Calu3 (cell line): ENCODE measurements at regions of chr18 and their contacts with region 1.

Region 1: DNA sequence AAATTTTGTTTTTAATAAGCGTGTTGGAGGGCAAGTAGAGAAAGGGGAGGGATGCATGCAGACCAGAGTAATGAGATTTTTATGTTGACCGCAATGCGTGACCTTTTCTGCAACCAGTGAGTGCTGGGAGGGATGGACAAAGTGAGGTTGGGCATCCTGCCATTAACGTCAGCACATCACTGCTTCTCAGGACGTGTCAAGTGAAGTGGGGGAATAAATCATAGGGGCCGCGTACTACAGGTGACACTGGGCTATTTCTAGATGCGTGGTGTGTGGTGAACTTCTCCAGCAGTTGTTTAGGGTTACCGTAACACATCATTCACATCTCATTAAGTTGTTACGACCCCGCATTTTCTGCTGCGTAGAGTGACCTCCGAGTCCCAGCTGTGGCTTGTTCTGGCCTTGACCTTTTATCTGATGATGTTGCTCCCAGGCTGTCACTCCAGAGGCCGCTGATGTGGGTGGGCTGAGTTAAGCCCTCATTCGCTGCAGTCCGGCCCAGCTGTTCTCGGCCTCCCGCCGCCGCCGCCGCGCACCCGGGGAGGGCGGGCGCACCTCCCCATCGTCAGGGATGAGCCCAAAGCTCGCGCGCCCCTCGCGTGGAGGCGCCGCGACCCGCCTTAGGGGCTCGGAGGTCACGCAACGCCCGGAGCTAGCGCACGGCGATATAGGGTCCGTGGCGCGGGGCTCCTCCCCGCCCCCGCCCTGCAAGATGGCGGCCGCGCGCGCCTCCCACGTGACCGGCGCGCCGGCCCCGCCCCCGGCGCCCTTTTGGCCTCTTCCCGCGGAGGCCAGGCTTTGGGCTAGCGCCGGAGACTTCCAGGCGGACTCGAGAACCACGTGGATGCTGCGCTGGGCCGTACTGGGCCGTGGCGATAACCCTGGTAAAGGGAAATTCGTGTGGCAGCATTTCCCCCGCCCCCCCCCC is 3.5 kb downstream of the ZCCHC2 start:
- DNase-seq: peak; percentile 83
- H3K4me3 Mint-ChIP-seq: peak overlapping the region; percentile 84
- H3K27ac Mint-ChIP-seq: peak overlapping the region; percentile 97
- H3K4me1 Mint-ChIP-seq: peaks cover 38% of the 10 kb centered on the region
- H3K27me3 Mint-ChIP-seq: no peaks in the 10 kb centered on the region
- CTCF ChIP-seq: no peak

Region 2: DNA sequence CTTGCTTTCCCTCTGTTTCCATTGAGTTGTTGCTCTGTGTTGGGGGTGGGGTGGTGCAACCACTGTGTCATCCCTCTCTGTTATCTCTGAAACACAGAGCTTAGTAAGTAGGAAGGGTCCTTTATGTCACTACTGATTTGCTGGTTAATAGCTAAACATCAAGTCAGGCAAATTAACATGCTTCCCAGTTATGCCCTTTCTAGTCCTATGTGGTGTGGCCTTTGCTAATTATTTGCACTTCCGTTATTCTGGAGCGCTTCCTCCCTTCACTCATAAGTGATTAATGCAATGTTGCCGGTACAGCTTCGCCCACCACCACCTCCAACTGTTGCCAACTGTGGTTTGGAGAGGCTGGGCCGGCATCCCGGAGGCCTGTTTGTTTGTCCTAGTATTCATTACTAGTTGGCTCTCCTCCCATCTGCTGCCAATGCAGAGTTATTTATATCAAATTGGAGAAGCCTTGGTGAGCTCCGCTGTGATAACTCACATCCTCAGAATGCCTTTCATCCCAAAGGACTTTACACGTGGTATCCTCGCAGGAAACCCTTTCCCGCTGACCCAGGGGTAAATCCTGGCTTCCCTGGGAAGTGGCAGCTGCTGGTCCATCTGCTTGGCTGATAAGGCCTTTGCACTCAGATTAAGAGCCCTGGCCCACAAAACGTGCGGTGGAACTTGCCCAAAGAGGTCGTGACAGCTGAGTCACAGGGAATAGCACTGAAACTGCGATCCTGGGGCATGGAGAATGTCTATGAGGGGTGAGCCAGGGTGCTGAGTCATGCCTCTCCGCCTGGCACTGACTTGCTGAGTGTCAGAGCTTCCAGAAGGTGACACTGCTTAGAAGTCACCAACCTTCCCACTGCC is 75.6 kb before region 1 on chr18:
- CTCF ChIA-PET with region 1: interaction called, 8 read pairs
- intact Hi-C with region 1: loop called (anchors 5 kb)
- DNase-seq: peak; percentile 86
- H3K4me3 Mint-ChIP-seq: peak overlapping the region; percentile 25
- H3K27ac Mint-ChIP-seq: peak overlapping the region; percentile 62
- H3K4me1 Mint-ChIP-seq: peaks cover 51% of the 10 kb centered on the region
- H3K27me3 Mint-ChIP-seq: no peaks in the 10 kb centered on the region
- CTCF ChIP-seq: no peak

Region 3: DNA sequence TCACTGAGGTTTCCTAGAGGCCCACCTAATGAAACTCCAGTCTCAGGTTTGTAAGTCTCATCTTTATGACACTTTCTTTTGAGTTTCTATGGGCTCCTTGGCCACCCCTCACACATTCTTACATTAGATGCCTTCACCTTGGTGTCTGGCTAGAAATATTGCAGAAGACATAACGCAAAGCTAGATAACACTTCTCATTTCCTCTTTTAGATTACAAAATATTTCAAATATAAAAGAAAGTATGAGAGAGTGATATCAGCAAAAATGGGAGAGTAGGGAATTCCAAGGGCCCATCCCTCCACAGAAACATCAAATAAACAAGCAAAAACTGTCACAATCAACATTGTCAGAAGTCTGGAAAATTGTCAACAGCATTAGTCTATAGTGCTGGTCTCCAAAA is 46.8 kb before region 1 on chr18:
- CTCF ChIA-PET with region 1: no interaction called
- intact Hi-C with region 1: no loop called
- DNase-seq: no peak
- H3K4me3 Mint-ChIP-seq: no peak overlapping the region
- H3K27ac Mint-ChIP-seq: no peak overlapping the region
- H3K4me1 Mint-ChIP-seq: peaks cover 4% of the 10 kb centered on the region
- H3K27me3 Mint-ChIP-seq: no peaks in the 10 kb centered on the region
- CTCF ChIP-seq: no peak

Region 4: GRCh38 chr18:62545098-62545497 is 18.7 kb after region 1 on chr18:
- CTCF ChIA-PET with region 1: no interaction called
- intact Hi-C with region 1: no loop called
- DNase-seq: no peak
- H3K4me3 Mint-ChIP-seq: no peak overlapping the region
- H3K27ac Mint-ChIP-seq: no peak overlapping the region
- H3K4me1 Mint-ChIP-seq: no peaks in the 10 kb centered on the region
- H3K27me3 Mint-ChIP-seq: no peaks in the 10 kb centered on the region
- CTCF ChIP-seq: no peak

Region 5: DNA sequence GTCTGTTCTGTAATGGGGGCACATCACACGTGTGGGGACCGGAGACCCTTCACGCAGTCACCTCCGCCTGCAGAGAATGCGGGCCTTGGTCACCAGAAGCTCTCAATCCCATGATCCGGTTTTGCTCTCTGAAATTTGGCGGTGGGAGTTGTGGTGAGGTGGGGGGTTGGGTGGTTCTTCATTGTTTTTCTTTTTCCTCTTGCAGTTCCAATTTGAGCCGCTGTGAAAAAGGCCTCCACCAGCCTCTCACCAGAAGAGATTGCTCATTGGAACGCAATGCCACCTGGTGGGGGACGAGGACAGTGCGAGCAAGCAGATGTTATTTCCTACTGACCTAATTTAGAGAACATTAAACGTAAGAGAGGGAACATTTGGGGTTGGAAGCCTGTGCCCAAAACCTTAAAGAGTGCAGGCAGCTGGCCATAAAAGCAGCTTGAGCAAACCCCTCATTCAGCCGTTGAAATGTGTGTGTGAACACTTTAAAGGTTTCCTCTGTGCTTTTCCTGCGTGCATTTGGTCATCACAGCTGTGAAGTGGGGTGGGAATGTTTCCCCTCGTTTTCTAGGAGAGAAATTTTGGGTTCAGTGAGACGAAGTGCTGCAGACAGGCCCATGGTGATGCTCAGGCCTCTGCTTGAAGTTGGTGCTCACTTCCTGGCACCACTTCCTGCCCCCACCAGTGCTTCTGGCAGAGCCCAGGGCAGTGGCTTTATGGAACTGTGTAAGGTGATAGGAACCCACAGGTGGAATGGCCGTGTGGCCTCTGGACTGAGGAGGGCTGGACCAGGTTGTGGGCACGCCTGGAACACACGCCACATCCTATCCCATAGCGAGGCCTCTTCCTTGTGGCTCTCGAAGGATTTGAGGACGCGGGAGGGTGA is 58.1 kb after region 1 on chr18:
- CTCF ChIA-PET with region 1: no interaction called
- intact Hi-C with region 1: no loop called
- DNase-seq: peak; percentile 90
- H3K4me3 Mint-ChIP-seq: no peak overlapping the region
- H3K27ac Mint-ChIP-seq: no peak overlapping the region
- H3K4me1 Mint-ChIP-seq: peaks cover 20% of the 10 kb centered on the region
- H3K27me3 Mint-ChIP-seq: no peaks in the 10 kb centered on the region
- CTCF ChIP-seq: peak; percentile 95

Region 6: DNA sequence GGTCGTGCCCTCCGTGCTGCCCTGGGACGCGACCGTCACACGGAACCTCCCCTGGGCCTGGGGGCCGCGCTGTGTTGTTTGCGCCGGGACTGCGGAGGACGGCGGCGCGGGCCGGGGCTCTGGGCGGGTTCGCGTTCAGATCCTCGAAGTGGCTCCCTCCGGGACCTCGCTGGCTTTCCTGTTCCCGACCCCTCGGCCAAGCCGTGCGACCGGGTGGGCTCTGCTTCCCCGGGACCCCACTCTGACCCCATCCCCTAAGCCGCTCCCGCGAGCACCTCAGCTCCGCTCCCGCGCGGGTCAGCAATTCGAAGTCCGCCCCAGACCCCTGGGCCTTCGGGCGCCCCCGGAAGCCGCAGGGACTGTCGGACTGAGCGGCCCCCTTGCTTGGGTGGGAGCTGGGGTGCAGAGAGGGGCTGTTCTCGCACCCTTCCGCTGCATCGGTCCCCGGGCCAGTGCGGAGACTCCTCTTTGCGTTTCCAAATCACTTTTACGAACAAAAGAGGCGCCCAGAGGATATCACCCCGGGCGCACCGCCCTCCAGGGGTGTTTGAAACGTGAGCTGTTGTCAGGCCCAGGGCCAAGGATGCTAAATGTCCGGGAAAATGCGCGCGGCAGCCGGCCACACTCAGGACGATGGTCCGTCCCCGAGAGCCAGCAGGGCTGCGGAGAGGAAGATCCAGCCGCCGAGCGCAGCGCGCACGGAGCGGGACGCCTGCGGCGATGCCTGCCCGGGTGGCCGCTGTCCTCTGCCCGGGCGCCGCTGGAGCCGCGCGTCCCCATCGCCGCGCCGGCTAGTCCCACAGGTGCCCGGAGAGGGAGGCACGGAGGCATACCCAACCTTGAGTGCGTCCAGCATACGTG is 70.0 kb after region 1 on chr18:
- CTCF ChIA-PET with region 1: no interaction called
- intact Hi-C with region 1: no loop called
- DNase-seq: peak; percentile 35
- H3K4me3 Mint-ChIP-seq: peak overlapping the region; percentile 65
- H3K27ac Mint-ChIP-seq: no peak overlapping the region
- H3K4me1 Mint-ChIP-seq: no peaks in the 10 kb centered on the region
- H3K27me3 Mint-ChIP-seq: peaks cover 56% of the 10 kb centered on the region
- CTCF ChIP-seq: no peak